B cell (primary cell): ENCODE measurements at regions of chr6 and their contacts with region 1.

Region 1: GRCh38 chr6:47787620-47788497 is 6.0 kb downstream of the OPN5 start:
- DNase-seq: peak; percentile 55
- ATAC-seq: peak; percentile 36
- H3K4me3 ChIP-seq: no peak overlapping the region
- H3K4me3 Mint-ChIP-seq: no peak overlapping the region
- H3K27ac ChIP-seq: no peak overlapping the region
- H3K27ac Mint-ChIP-seq: no peak overlapping the region
- H3K4me1 ChIP-seq: peaks cover 0 to 4% of the 10 kb centered on the region in 2 donors
- H3K4me1 Mint-ChIP-seq: peaks cover 4% of the 10 kb centered on the region
- H3K27me3 ChIP-seq: peaks cover 0 to 15% (median 1%) of the 10 kb centered on the region in 4 experiments
- H3K27me3 Mint-ChIP-seq: peaks cover 25% of the 10 kb centered on the region
- CTCF ChIP-seq: peak; percentile 88

Region 2: DNA sequence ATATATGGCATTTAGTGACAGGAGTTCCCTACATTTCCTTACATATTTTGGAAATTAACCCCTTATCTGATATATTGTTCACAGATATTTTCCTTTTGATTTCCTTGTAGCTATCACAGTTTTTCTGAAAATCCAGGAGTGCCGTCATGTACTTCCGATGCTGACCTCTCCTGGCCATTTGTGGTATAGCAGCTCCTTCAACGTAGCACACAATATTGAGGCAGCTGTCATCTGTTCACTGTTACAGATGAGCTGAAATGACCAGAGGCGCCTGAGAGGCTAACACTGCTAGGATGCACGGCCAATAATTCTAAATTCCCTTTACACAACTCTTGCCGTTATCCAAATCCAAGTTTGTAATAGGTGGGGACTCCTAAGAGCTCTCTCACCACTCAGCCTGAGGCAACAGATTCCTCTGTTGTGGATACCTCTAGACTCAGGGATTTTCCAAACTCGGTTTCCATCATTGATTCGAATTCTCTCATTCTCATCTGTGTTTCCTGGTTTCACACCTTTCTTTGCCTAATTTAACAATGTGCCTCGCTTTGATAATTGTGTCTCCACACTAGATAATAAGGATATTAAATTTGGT is 1622.2 kb after region 1 on chr6:
- CTCF ChIA-PET with region 1: interaction called, 11 read pairs
- POLR2A ChIA-PET with region 1: no interaction called
- intact Hi-C with region 1: no loop called
- DNase-seq: peak; percentile 53
- ATAC-seq: peak; percentile 54
- H3K4me3 ChIP-seq: no peak overlapping the region
- H3K4me3 Mint-ChIP-seq: no peak overlapping the region
- H3K27ac ChIP-seq: no peak overlapping the region
- H3K27ac Mint-ChIP-seq: no peak overlapping the region
- H3K4me1 ChIP-seq: no peaks in the 10 kb centered on the region
- H3K4me1 Mint-ChIP-seq: no peaks in the 10 kb centered on the region
- H3K27me3 ChIP-seq: no peaks in the 10 kb centered on the region
- H3K27me3 Mint-ChIP-seq: peaks cover 9% of the 10 kb centered on the region
- CTCF ChIP-seq: peak; percentile 89